Activated B cell treated with CpG ODN at 0.5 μM for 24 hours (primary cell): ENCODE measurements at regions of chr10 and their contacts with region 1.

Region 1: GRCh38 chr10:28663576-28664313 is 13.6 kb upstream of the BAMBI start:
- DNase-seq: peak; percentile 32
- ATAC-seq: peak; percentile 84
- H3K4me3 Mint-ChIP-seq: no peak overlapping the region
- H3K27ac Mint-ChIP-seq: no peak overlapping the region
- H3K4me1 Mint-ChIP-seq: peaks cover 7% of the 10 kb centered on the region
- H3K27me3 Mint-ChIP-seq: peaks cover 41% of the 10 kb centered on the region
- CTCF ChIP-seq: no peak

Region 2: GRCh38 chr10:28991326-28992270 is 327.9 kb after region 1 on chr10:
- CTCF ChIA-PET with region 1: interaction called, 20 read pairs
- POLR2A ChIA-PET with region 1: no interaction called
- intact Hi-C with region 1: no loop called
- DNase-seq: no peak
- ATAC-seq: no peak
- H3K4me3 Mint-ChIP-seq: no peak overlapping the region
- H3K27ac Mint-ChIP-seq: no peak overlapping the region
- H3K4me1 Mint-ChIP-seq: no peaks in the 10 kb centered on the region
- H3K27me3 Mint-ChIP-seq: no peaks in the 10 kb centered on the region
- CTCF ChIP-seq: no peak

Region 3: GRCh38 chr10:29304264-29305030 is 640.7 kb after region 1 on chr10:
- CTCF ChIA-PET with region 1: interaction called, 34 read pairs
- POLR2A ChIA-PET with region 1: no interaction called
- intact Hi-C with region 1: loop called (anchors 1 kb)
- DNase-seq: no peak
- ATAC-seq: no peak
- H3K4me3 Mint-ChIP-seq: no peak overlapping the region
- H3K27ac Mint-ChIP-seq: no peak overlapping the region
- H3K4me1 Mint-ChIP-seq: no peaks in the 10 kb centered on the region
- H3K27me3 Mint-ChIP-seq: peaks cover 11% of the 10 kb centered on the region
- CTCF ChIP-seq: no peak

Region 4: GRCh38 chr10:29443745-29444523 is 780.2 kb after region 1 on chr10:
- CTCF ChIA-PET with region 1: interaction called, 4 read pairs
- POLR2A ChIA-PET with region 1: no interaction called
- intact Hi-C with region 1: loop called (anchors 1 kb)
- DNase-seq: no peak
- ATAC-seq: no peak
- H3K4me3 Mint-ChIP-seq: no peak overlapping the region
- H3K27ac Mint-ChIP-seq: no peak overlapping the region
- H3K4me1 Mint-ChIP-seq: no peaks in the 10 kb centered on the region
- H3K27me3 Mint-ChIP-seq: no peaks in the 10 kb centered on the region
- CTCF ChIP-seq: no peak

Region 5: GRCh38 chr10:29512425-29512974 is 848.8 kb after region 1 on chr10:
- CTCF ChIA-PET with region 1: no interaction called
- POLR2A ChIA-PET with region 1: no interaction called
- intact Hi-C with region 1: loop called (anchors 5 kb)
- DNase-seq: no peak
- ATAC-seq: no peak
- H3K4me3 Mint-ChIP-seq: no peak overlapping the region
- H3K27ac Mint-ChIP-seq: no peak overlapping the region
- H3K4me1 Mint-ChIP-seq: no peaks in the 10 kb centered on the region
- H3K27me3 Mint-ChIP-seq: no peaks in the 10 kb centered on the region
- CTCF ChIP-seq: no peak